GM12878 (cell line): ENCODE measurements at regions of chr17 and their contacts with region 1.

Region 1: DNA sequence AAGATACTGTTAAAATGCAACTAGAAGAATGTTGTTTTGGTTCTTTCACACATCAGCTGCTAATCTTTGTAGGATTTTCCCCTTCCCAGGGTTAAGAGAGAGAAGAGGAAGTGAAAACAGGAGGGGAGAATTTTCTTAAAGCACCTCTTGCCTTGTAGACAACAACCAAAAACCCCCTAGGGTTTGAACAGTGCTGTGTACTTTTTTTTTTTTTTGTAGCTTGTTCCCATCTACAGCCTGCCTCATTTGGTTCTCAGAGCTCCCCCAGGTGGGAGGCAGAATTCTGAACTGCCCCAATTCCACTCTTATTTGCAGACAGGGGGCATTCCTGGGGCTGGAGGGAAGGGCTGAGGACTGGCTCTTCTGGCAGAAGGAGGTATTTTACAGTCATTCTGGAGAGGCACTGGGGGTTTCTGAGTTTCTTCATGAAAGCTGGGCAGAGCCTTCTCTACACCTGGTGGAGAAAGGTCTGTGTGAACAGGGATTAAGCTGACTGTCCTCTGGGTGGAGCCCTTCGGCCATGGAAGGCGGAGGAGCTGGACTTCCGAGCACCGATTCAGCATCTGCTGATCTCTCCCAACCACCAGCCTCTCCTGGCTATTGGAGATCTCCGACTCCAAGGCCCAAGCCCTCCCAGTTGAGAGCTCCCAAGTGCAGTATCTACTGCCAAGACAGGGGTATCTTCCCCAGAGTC is 32.2 kb downstream of the SMARCE1 start:
- DNase-seq: peak; percentile 93
- ATAC-seq: peak; percentile 75
- H3K4me3 ChIP-seq: peak overlapping the region; percentile 35; the same call in 1 of the 2 replicates
- H3K27ac ChIP-seq: peak overlapping the region; percentile 29
- H3K4me1 ChIP-seq: peaks cover 30% of the 10 kb centered on the region
- H3K27me3 ChIP-seq: no peaks in the 10 kb centered on the region
- CTCF ChIP-seq: peak; percentile 57 to 65 (median 60)
- EP300 ChIP-seq: peak; percentile 97 to 98
- POLR2A ChIP-seq: no peak
- RAD21 ChIP-seq: peak; percentile 68

Region 2: DNA sequence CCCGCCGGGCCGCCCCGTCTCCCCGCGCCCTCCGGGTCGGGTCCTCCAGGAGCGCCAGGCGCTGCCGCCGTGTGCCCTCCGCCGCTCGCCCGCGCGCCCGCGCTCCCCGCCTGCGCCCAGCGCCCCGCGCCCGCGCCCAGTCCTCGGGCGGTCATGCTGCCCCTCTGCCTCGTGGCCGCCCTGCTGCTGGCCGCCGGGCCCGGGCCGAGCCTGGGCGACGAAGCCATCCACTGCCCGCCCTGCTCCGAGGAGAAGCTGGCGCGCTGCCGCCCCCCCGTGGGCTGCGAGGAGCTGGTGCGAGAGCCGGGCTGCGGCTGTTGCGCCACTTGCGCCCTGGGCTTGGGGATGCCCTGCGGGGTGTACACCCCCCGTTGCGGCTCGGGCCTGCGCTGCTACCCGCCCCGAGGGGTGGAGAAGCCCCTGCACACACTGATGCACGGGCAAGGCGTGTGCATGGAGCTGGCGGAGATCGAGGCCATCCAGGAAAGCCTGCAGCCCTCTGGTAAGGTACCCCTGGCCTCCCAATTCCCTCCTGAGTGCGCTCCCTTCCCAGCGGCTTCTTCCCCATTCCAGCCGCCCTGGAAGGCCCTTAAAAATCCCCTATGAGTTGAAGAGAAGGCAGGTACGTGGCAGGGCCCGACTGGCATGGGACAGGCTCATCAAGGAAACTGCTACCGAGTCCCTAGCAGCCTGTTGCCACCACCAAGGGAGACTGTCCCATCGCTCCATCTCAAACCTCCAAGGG is 171.7 kb before region 1 on chr17:
- CTCF ChIA-PET with region 1: interaction called, 17 read pairs
- POLR2A ChIA-PET with region 1: no interaction called
- RAD21 ChIA-PET with region 1: interaction called, 8 read pairs
- SMC1A ChIA-PET with region 1: interaction called, 10 read pairs
- in situ Hi-C with region 1: no loop called
- intact Hi-C with region 1: no loop called
- DNase-seq: no peak
- ATAC-seq: peak; percentile 84
- H3K4me3 ChIP-seq: peak overlapping the region; percentile 61
- H3K27ac ChIP-seq: no peak overlapping the region
- H3K4me1 ChIP-seq: peaks cover 19% of the 10 kb centered on the region
- H3K27me3 ChIP-seq: peaks cover 0 to 16% of the 10 kb centered on the region in 2 experiments; a peak in 1 of 4 replicates
- CTCF ChIP-seq: peak; percentile 46 to 72 (median 71)
- EP300 ChIP-seq: no peak
- POLR2A ChIP-seq: no peak
- RAD21 ChIP-seq: peak; percentile 33; the same call in 1 of the 2 replicates

Region 3: DNA sequence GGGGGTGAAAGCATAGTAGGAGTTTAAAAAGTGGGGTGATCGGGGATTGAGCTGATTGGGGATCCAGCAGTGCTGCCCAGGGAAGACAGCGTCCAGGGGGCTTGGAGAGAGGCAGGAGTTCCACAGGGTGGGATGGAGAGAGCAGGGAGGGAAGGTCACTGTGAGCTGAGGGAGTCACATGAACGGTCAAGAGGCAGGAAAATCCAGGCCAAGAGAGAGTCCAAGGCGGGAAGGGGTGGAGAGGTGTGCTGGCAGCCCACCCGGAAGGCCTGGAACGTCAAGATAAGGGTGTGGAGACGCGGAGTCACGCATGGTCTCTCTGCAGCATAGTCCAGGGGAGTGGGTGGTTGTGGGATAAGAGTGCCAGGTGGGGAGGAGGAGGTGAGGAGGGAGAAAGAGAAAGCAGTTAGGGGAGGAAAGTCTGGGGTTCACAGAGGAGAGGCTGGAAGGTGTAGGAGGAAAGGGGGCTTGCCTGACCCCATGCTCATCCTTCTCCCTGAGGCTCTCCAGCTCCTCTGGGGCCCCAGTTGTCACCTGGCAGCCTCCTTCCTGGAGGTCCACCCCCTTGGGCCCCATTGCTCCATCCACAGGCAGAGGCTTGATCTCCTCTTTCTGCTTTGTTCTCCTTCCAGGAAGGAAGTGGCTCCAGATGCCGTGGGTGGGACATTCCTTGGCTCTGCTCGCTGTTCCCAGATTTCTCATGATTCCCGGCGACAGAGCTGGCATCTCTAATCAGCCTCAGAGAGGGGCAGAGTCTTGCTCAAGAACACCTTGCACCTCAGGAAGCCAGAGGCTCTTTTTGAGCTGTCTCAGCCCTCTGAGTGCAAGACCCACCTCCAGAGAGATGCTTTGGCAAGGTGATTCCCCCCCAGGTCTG is 78.9 kb before region 1 on chr17:
- CTCF ChIA-PET with region 1: interaction called, 193 read pairs
- POLR2A ChIA-PET with region 1: interaction called, 40 read pairs
- RAD21 ChIA-PET with region 1: interaction called, 123 read pairs
- SMC1A ChIA-PET with region 1: interaction called, 175 read pairs
- in situ Hi-C with region 1: no loop called
- intact Hi-C with region 1: no loop called
- DNase-seq: no peak
- ATAC-seq: no peak
- H3K4me3 ChIP-seq: no peak overlapping the region
- H3K27ac ChIP-seq: no peak overlapping the region
- H3K4me1 ChIP-seq: peaks cover 64% of the 10 kb centered on the region
- H3K27me3 ChIP-seq: no peaks in the 10 kb centered on the region; a peak in 1 of 4 replicates
- CTCF ChIP-seq: no peak
- EP300 ChIP-seq: no peak
- POLR2A ChIP-seq: no peak
- RAD21 ChIP-seq: no peak

Region 4: DNA sequence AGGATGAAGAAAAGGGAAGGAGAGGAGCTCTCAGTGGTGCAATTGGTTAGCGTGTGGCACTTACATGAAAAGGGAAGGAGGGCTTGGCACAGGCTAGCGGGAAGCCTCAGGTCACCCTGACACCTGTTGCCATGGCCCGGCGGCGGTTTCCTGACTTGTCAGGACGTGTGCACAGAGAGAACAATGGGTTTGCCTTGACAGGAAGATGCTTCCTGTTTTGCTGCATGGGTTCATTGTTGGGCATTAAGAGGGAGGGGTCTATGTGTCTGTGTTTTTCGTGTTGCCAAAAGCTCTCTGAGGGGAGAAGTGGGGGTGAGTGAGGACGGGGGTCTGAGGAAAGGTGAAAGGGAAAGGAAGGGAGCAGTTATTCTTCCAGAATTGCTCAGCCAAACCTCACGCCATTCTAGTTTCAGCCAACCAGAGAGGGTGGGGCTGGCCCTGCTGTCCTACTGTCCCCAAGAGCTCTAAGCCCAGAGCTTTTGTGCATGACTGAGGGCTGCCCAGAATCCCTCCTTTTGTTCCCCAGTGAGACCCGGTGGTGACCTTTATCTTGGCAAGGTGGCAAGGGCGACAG is 33.0 kb before region 1 on chr17:
- CTCF ChIA-PET with region 1: interaction called, 36 read pairs
- POLR2A ChIA-PET with region 1: interaction called, 33 read pairs
- RAD21 ChIA-PET with region 1: interaction called, 74 read pairs
- SMC1A ChIA-PET with region 1: interaction called, 42 read pairs
- in situ Hi-C with region 1: no loop called
- intact Hi-C with region 1: loop called (anchors 2 kb)
- DNase-seq: peak; percentile 99
- ATAC-seq: peak; percentile 87
- H3K4me3 ChIP-seq: no peak overlapping the region
- H3K27ac ChIP-seq: no peak overlapping the region
- H3K4me1 ChIP-seq: peaks cover 28% of the 10 kb centered on the region
- H3K27me3 ChIP-seq: peaks cover 0 to 4% of the 10 kb centered on the region in 2 experiments; a peak in 1 of 4 replicates
- CTCF ChIP-seq: no peak
- EP300 ChIP-seq: peak; percentile 59 to 60; a peak in 2 of 4 replicates
- POLR2A ChIP-seq: no peak
- RAD21 ChIP-seq: 0 out of 2 replicates have a peak, but pooled peaks have one; percentile 4

Region 5: GRCh38 chr17:40726919-40727318 is 111.5 kb after region 1 on chr17:
- CTCF ChIA-PET with region 1: interaction called, 14 read pairs
- POLR2A ChIA-PET with region 1: interaction called, 4 read pairs
- RAD21 ChIA-PET with region 1: interaction called, 16 read pairs
- SMC1A ChIA-PET with region 1: interaction called, 10 read pairs
- in situ Hi-C with region 1: no loop called
- intact Hi-C with region 1: loop called (anchors 5 kb)
- DNase-seq: no peak
- ATAC-seq: peak; percentile 49
- H3K4me3 ChIP-seq: no peak overlapping the region
- H3K27ac ChIP-seq: no peak overlapping the region
- H3K4me1 ChIP-seq: peaks cover 3% of the 10 kb centered on the region; the same call in 1 of the 2 replicates
- H3K27me3 ChIP-seq: no peaks in the 10 kb centered on the region; a peak in 1 of 4 replicates
- CTCF ChIP-seq: peak in 1 of 3 experiments; percentile 22; a peak in 2 of 6 replicates
- EP300 ChIP-seq: no peak
- POLR2A ChIP-seq: no peak
- RAD21 ChIP-seq: no peak

Region 6: DNA sequence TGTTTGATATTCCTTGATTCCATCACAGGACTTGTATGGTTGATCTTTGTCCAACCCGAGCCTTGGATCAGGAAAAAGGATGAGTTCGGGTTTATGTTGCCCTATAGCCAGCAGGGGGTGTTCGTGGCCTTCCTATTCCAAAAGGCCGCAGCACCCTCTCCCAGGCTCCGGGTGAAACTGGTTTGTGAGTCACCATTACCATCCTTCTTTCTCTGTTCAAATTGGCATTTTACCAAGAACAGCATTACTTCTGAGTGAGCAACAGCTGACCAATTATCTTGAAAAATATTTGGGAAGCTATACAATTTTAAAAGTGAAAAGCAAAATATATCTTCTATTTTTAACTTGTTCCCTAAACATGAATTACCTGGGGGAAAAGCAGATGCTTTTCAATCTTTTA is 293.9 kb after region 1 on chr17:
- CTCF ChIA-PET with region 1: interaction called, 3 read pairs
- POLR2A ChIA-PET with region 1: no interaction called
- RAD21 ChIA-PET with region 1: interaction called, 8 read pairs
- SMC1A ChIA-PET with region 1: interaction called, 4 read pairs
- in situ Hi-C with region 1: no loop called
- intact Hi-C with region 1: loop called (anchors 5 kb)
- DNase-seq: no peak
- ATAC-seq: peak; percentile 84
- H3K4me3 ChIP-seq: no peak overlapping the region
- H3K27ac ChIP-seq: no peak overlapping the region
- H3K4me1 ChIP-seq: 0 out of 2 replicates have a peak, but pooled peaks cover 2% of the 10 kb centered on the region
- H3K27me3 ChIP-seq: peaks cover 0 to 4% of the 10 kb centered on the region in 2 experiments; a peak in 1 of 4 replicates
- CTCF ChIP-seq: peak; percentile 56 to 72 (median 68)
- EP300 ChIP-seq: no peak
- POLR2A ChIP-seq: no peak
- RAD21 ChIP-seq: peak; percentile 79

Region 7: DNA sequence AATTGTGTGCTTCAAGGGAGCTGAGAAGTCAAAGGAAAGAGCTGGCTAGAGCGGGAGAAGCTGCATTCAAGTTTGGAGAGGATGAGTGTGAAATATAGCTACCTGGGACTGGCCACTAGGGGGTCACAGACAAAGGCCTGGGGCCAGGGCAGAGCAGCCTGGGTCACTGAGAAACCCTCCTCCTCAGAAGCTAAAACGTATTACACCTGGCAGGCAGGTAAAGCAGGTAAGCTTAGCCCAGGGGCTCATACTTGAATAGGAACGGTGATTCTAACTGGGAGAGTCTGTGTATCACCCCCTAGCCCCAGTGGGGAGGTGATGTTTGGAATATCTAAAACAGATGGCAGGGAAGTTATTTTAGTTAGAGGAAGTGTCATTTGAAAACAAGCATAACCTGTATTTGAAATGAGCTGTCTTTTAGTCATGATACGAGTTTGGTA is 802.2 kb after region 1 on chr17:
- CTCF ChIA-PET with region 1: no interaction called
- POLR2A ChIA-PET with region 1: no interaction called
- RAD21 ChIA-PET with region 1: no interaction called
- SMC1A ChIA-PET with region 1: no interaction called
- in situ Hi-C with region 1: no loop called
- intact Hi-C with region 1: no loop called
- DNase-seq: no peak
- ATAC-seq: peak; percentile 76
- H3K4me3 ChIP-seq: no peak overlapping the region
- H3K27ac ChIP-seq: no peak overlapping the region
- H3K4me1 ChIP-seq: no peaks in the 10 kb centered on the region
- H3K27me3 ChIP-seq: no peaks in the 10 kb centered on the region; a peak in 1 of 4 replicates
- CTCF ChIP-seq: peak; percentile 29 to 68 (median 59)
- EP300 ChIP-seq: no peak
- POLR2A ChIP-seq: no peak
- RAD21 ChIP-seq: no peak